CD8-positive, alpha-beta T cell (primary cell): ENCODE measurements at regions of chr1 and their contacts with region 1.

Region 1: GRCh38 chr1:88998716-88999115 is 6.3 kb upstream of the KYAT3 start:
- DNase-seq: peak in 3 of 9 experiments; percentile 38 to 84 (median 78)
- ATAC-seq: peak; percentile 89
- H3K4me3 ChIP-seq: no peak overlapping the region
- H3K4me3 Mint-ChIP-seq: no peak overlapping the region
- H3K27ac ChIP-seq: no peak overlapping the region
- H3K27ac Mint-ChIP-seq: no peak overlapping the region
- H3K4me1 ChIP-seq: peaks cover 23% of the 10 kb centered on the region
- H3K4me1 Mint-ChIP-seq: peaks cover 36% of the 10 kb centered on the region
- H3K27me3 ChIP-seq: no peaks in the 10 kb centered on the region
- H3K27me3 Mint-ChIP-seq: no peaks in the 10 kb centered on the region
- CTCF ChIP-seq: peak; percentile 60

Region 2: DNA sequence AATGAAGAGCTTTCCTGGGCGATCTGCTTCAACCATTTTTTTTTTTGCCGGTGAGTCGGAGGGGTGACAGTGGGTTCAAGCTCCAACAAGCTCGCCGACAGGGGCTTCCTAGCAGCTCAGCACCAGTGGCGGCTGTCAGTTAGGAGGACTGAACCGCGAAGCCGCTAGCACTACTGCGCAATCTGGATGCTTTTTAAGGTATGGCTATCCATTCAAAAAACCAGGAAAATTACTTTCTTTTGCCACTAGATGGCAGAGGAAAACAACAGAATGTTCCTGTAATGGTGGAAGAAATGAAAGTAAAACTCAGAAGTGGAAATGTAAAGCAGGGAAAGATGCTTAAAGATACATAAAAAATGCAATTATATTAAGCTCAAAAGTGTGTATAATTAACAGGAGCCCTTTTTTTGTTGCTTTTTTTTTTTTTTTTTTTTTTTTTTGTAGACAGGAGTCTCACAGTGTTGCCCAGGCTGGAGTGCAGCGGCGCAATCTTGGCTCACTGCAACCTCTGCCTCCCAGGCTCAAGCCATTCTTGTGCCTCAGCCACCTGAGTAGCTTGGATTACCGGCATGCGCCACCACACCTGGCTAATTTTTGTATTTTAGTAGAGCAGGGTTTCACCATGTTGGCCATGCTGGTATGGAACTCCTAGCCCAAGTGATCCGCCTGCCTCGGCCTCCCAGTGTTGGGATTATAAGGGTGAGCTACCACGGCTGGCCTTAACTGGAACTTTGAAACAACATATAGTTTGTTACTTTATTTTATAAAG is 14.7 kb before region 1 on chr1:
- CTCF ChIA-PET with region 1: interaction called, 40 read pairs
- POLR2A ChIA-PET with region 1: no interaction called
- intact Hi-C with region 1: no loop called
- DNase-seq: peak in 4 of 9 experiments; percentile 23 to 83 (median 61)
- ATAC-seq: peak; percentile 85
- H3K4me3 ChIP-seq: no peak overlapping the region
- H3K4me3 Mint-ChIP-seq: peak overlapping the region; percentile 47
- H3K27ac ChIP-seq: peak overlapping the region in 1 of 2 experiments; percentile 38
- H3K27ac Mint-ChIP-seq: peak overlapping the region; percentile 52
- H3K4me1 ChIP-seq: peaks cover 15% of the 10 kb centered on the region
- H3K4me1 Mint-ChIP-seq: peaks cover 62% of the 10 kb centered on the region
- H3K27me3 ChIP-seq: no peaks in the 10 kb centered on the region
- H3K27me3 Mint-ChIP-seq: no peaks in the 10 kb centered on the region
- CTCF ChIP-seq: peak; percentile 69

Region 3: GRCh38 chr1:89065079-89065868 is 66.6 kb after region 1 on chr1 and contains the start of gene GBP1:
- CTCF ChIA-PET with region 1: interaction called, 3 read pairs
- POLR2A ChIA-PET with region 1: no interaction called
- intact Hi-C with region 1: loop called in 1 of 2 experiments (anchors 2 kb)
- DNase-seq: peak in 2 of 9 experiments; percentile 63 to 78
- ATAC-seq: peak; percentile 85
- H3K4me3 ChIP-seq: peak within 1 kb of the TSS; percentile 60 to 68
- H3K4me3 Mint-ChIP-seq: peak within 1 kb of the TSS; percentile 98
- H3K27ac ChIP-seq: peak within 1 kb of the TSS; percentile 65 to 80
- H3K27ac Mint-ChIP-seq: peak within 1 kb of the TSS; percentile 98
- H3K4me1 ChIP-seq: peaks cover 35% of the 10 kb centered on the region
- H3K4me1 Mint-ChIP-seq: peaks cover 63% of the 10 kb centered on the region
- H3K27me3 ChIP-seq: no peaks in the 10 kb centered on the region
- H3K27me3 Mint-ChIP-seq: no peaks in the 10 kb centered on the region
- CTCF ChIP-seq: no peak
- total RNA-seq, gene GBP1: 20.8 to 25.9 TPM

Region 4: GRCh38 chr1:89125913-89126580 is 127.3 kb after region 1 on chr1 and contains the start of gene GBP2:
- CTCF ChIA-PET with region 1: interaction called, 3 read pairs
- POLR2A ChIA-PET with region 1: no interaction called
- intact Hi-C with region 1: loop called in 1 of 2 experiments (anchors 2 kb)
- DNase-seq: peak in 5 of 9 experiments; percentile 24 to 77 (median 44)
- ATAC-seq: peak; percentile 74
- H3K4me3 ChIP-seq: peak within 1 kb of the TSS; percentile 59 to 75
- H3K4me3 Mint-ChIP-seq: peak within 1 kb of the TSS; percentile 97
- H3K27ac ChIP-seq: peak within 1 kb of the TSS; percentile 59 to 78
- H3K27ac Mint-ChIP-seq: peak within 1 kb of the TSS; percentile 99
- H3K4me1 ChIP-seq: peaks cover 39% of the 10 kb centered on the region
- H3K4me1 Mint-ChIP-seq: peaks cover 66% of the 10 kb centered on the region
- H3K27me3 ChIP-seq: no peaks in the 10 kb centered on the region
- H3K27me3 Mint-ChIP-seq: no peaks in the 10 kb centered on the region
- CTCF ChIP-seq: no peak
- total RNA-seq, gene GBP2: 120 to 125 TPM

Region 5: GRCh38 chr1:89198491-89199072 is 199.9 kb after region 1 on chr1 and contains the start of gene GBP4:
- CTCF ChIA-PET with region 1: interaction called, 4 read pairs
- POLR2A ChIA-PET with region 1: no interaction called
- intact Hi-C with region 1: loop called (anchors 2 to 5 kb)
- DNase-seq: peak in 8 of 9 experiments; percentile 31 to 84 (median 55)
- ATAC-seq: peak; percentile 50
- H3K4me3 ChIP-seq: peak within 1 kb of the TSS; percentile 70 to 87
- H3K4me3 Mint-ChIP-seq: peak within 1 kb of the TSS; percentile 95
- H3K27ac ChIP-seq: peak within 1 kb of the TSS; percentile 80 to 86
- H3K27ac Mint-ChIP-seq: peak within 1 kb of the TSS; percentile 93
- H3K4me1 ChIP-seq: peaks cover 57% of the 10 kb centered on the region
- H3K4me1 Mint-ChIP-seq: peaks cover 68% of the 10 kb centered on the region
- H3K27me3 ChIP-seq: no peaks in the 10 kb centered on the region
- H3K27me3 Mint-ChIP-seq: no peaks in the 10 kb centered on the region
- CTCF ChIP-seq: no peak
- total RNA-seq, gene GBP4: 16.6 to 17.5 TPM

Region 6: GRCh38 chr1:89454845-89455521 is 456.3 kb after region 1 on chr1:
- CTCF ChIA-PET with region 1: interaction called, 26 read pairs
- POLR2A ChIA-PET with region 1: no interaction called
- intact Hi-C with region 1: loop called (anchors 1 kb)
- DNase-seq: peak; percentile 15 to 77 (median 60)
- ATAC-seq: peak; percentile 94
- H3K4me3 ChIP-seq: no peak overlapping the region
- H3K4me3 Mint-ChIP-seq: no peak overlapping the region
- H3K27ac ChIP-seq: no peak overlapping the region
- H3K27ac Mint-ChIP-seq: no peak overlapping the region
- H3K4me1 ChIP-seq: no peaks in the 10 kb centered on the region
- H3K4me1 Mint-ChIP-seq: peaks cover 7% of the 10 kb centered on the region
- H3K27me3 ChIP-seq: no peaks in the 10 kb centered on the region
- H3K27me3 Mint-ChIP-seq: peaks cover 7% of the 10 kb centered on the region
- CTCF ChIP-seq: peak; percentile 96